CD8-positive, alpha-beta T cell (primary cell): ENCODE measurements at regions of chr10 and their contacts with region 1.

Region 1: DNA sequence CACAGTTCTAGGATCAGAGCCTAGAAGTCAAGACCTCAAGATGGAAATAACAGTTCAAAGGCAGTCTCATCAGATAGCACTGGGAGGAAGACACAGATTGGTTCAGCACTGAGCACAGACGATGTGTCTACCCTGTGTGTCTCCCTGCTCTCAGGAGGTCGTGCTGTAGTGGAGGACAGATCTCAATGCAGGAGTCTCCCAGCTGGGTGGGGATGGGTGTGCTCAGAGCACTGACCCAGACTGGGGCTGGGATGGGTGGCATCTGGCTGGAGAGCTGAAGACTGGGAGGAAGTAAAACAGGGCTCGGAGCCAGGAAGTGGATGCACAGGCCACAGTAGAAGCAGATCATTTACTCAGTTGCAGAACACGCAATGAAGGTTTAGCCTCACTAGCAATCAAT is 69.5 kb upstream of the GDF10 start:
- DNase-seq: peak in 1 of 9 experiments; percentile 47
- ATAC-seq: no peak
- H3K4me3 ChIP-seq: no peak overlapping the region
- H3K4me3 Mint-ChIP-seq: peak overlapping the region; percentile 44
- H3K27ac ChIP-seq: no peak overlapping the region
- H3K27ac Mint-ChIP-seq: peak overlapping the region; percentile 78
- H3K4me1 ChIP-seq: peaks cover 10% of the 10 kb centered on the region
- H3K4me1 Mint-ChIP-seq: peaks cover 20% of the 10 kb centered on the region
- H3K27me3 ChIP-seq: no peaks in the 10 kb centered on the region
- H3K27me3 Mint-ChIP-seq: no peaks in the 10 kb centered on the region
- CTCF ChIP-seq: no peak

Region 2: GRCh38 chr10:47137311-47137851 is 93.1 kb before region 1 on chr10:
- CTCF ChIA-PET with region 1: no interaction called
- POLR2A ChIA-PET with region 1: no interaction called
- intact Hi-C with region 1: no loop called
- DNase-seq: no peak
- ATAC-seq: no peak
- H3K4me3 ChIP-seq: no peak overlapping the region
- H3K4me3 Mint-ChIP-seq: no peak overlapping the region
- H3K27ac ChIP-seq: no peak overlapping the region
- H3K27ac Mint-ChIP-seq: no peak overlapping the region
- H3K4me1 ChIP-seq: no peaks in the 10 kb centered on the region
- H3K4me1 Mint-ChIP-seq: peaks cover 7% of the 10 kb centered on the region
- H3K27me3 ChIP-seq: no peaks in the 10 kb centered on the region
- H3K27me3 Mint-ChIP-seq: no peaks in the 10 kb centered on the region
- CTCF ChIP-seq: no peak

Region 3: GRCh38 chr10:47217113-47217512 is 13.4 kb before region 1 on chr10:
- CTCF ChIA-PET with region 1: interaction called, 3 read pairs
- POLR2A ChIA-PET with region 1: interaction called, 3 read pairs
- intact Hi-C with region 1: loop called in 1 of 2 experiments (anchors 2 kb)
- DNase-seq: no peak
- ATAC-seq: no peak
- H3K4me3 ChIP-seq: no peak overlapping the region
- H3K4me3 Mint-ChIP-seq: no peak overlapping the region
- H3K27ac ChIP-seq: no peak overlapping the region
- H3K27ac Mint-ChIP-seq: no peak overlapping the region
- H3K4me1 ChIP-seq: peaks cover 4% of the 10 kb centered on the region
- H3K4me1 Mint-ChIP-seq: peaks cover 36% of the 10 kb centered on the region
- H3K27me3 ChIP-seq: no peaks in the 10 kb centered on the region
- H3K27me3 Mint-ChIP-seq: no peaks in the 10 kb centered on the region
- CTCF ChIP-seq: no peak